GM18951 (cell line): ENCODE measurements at regions of chr6 and their contacts with region 1.

Region 1: DNA sequence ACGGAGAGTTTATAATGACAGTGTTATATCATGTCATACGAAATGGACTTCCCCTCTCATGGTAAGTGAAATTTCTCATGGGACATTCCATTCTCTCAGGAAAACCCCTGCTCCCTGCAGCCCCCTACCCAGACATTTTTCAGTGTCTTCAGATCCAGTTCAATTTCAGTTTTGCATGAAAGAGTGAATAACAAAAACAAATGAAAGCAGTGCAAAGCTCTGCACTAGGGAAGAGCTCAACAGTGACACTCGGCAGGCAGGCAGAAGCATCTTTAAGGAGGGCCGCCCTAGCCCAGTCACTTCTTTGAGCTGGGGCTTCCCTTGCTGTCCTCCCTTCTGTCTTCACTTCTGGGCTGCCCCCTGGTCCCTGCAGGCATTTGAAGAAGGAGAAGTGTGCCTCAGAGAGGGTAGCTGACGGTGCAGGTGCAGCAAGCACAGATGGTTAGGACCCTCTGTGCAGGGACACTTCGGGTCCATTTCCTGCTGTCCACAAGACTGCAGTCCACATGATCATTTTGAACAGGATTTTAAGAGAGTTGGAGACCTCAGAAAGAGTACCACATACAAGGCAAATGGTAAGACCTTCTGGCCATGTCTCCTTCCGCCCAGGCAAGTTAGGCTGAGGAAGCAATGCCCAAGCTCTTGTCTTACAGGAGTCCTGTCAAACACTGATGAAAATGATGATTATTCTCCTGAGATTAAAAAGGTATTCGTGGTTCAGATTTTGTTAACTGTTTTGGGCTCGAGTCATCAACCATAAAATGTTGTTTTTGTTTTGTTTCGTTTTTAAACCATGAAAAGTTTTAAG is 5.4 kb upstream of the DUSP22 start:
- POLR2A ChIP-seq: peak; percentile 21

Region 2: DNA sequence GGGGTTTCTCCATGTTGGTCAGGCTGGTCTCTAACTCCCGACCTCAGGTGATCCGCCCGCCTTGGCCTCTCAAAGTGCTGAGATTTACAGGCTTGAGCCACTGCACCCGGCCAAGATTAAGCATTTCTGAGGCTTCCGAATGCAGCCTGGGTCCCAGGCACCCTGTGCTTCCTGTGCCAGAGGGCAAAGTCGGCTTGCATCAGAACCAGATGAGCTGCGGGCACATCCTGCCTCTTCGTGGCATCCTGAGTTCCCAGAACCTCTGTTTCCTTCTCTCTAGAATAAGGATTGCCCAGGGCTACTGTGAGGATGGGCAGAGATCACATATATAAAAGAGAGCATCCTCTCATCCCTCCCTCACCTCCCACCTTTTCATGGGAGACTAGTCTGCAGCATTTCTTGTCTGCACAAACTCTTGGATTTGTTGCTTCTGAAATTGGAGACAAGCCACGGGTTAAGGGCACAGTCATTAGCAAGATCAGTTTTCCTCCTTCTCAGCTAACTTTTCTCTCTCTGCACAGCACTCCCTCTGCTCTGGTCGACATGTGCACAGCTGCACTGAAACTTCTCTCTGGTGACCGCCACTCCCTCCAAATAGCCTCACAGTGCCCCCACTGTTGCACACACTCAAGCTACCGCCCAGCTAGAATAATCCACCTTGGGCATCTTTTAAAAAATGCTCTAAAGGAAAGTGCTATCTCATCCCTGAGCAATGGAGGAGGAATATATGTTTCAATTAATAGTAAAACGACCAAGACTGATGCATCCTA is 45.6 kb before region 1 on chr6:
- in situ Hi-C with region 1: loop called (anchors 5 kb)
- POLR2A ChIP-seq: no peak